ENCODE measurements at regions of chr2 and their contacts with region 1.

Region 1: DNA sequence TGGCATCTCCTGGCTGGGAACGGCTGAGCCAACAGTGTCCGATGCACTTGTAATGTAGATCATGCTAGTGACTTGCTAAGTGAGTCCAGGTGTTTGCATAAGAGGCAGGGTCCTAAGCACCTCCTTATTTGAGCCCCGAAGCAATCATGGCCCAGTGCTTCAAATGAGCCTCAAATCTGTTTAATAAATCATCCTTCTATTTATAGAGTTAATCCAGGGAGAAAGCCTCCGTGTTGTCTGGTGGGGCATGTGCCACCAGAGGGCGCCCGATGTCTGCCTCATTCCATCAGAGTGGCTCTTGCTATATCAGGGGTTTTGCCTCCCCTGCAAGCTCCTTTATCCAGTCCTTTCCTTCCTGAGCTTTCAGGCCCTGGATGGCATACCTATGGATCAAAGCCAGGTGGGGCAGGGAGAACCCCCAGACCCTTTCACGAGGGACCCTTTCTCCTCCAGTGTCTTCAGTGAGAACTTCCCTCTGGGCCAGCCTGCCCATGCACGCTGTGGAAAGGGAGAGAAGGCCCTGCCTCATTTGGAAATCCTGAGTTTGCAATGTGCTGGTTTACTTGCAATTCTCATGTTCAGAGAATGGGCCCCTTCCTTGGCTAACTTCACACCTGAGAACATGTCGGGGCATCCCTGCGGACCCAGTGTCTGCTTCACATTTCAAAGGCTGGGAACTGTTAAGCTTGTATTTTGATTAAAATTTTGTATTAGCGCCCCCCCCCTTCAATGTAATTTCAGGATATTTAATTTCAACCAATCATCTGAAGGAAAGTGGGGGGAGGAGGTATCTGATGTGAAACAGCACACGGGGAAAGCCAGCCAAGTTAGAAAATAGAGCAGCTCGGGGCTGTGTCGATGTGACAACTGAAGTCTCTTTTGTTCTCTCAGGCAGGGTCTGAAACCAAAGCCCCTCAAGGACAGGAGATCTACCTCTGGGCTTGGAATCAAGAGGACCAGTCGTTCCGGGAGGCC is 39.7 kb downstream of the RDH14 start:
- DNase-seq: peak; percentile 78
- ATAC-seq: peak; percentile 58
- H3K4me3 ChIP-seq: no peak overlapping the region
- H3K27ac ChIP-seq: no peak overlapping the region
- H3K4me1 ChIP-seq: peaks cover 21% of the 10 kb centered on the region
- H3K27me3 ChIP-seq: no peaks in the 10 kb centered on the region
- CTCF ChIP-seq: peak; percentile 95
- POLR2A ChIP-seq: peak; percentile 39; the same call in 1 of the 2 replicates
- RAD21 ChIP-seq: peak; percentile 97

Region 2: GRCh38 chr2:17317439-17317976 is 1203.2 kb before region 1 on chr2:
- CTCF ChIA-PET with region 1: no interaction called
- POLR2A ChIA-PET with region 1: no interaction called
- dilution Hi-C with region 1: no loop called
- in situ Hi-C with region 1: no loop called
- intact Hi-C with region 1: no loop called
- DNase-seq: no peak
- ATAC-seq: no peak
- H3K4me3 ChIP-seq: no peak overlapping the region
- H3K27ac ChIP-seq: no peak overlapping the region
- H3K4me1 ChIP-seq: no peaks in the 10 kb centered on the region
- H3K27me3 ChIP-seq: no peaks in the 10 kb centered on the region; the same call in 1 of the 2 replicates
- CTCF ChIP-seq: no peak
- POLR2A ChIP-seq: no peak
- RAD21 ChIP-seq: no peak

Region 3: GRCh38 chr2:18387441-18388206 is 133.1 kb before region 1 on chr2:
- CTCF ChIA-PET with region 1: interaction called, 3 read pairs
- POLR2A ChIA-PET with region 1: no interaction called
- dilution Hi-C with region 1: no loop called
- in situ Hi-C with region 1: no loop called
- intact Hi-C with region 1: loop called (anchors 5 kb)
- DNase-seq: peak; percentile 79
- ATAC-seq: peak; percentile 99
- H3K4me3 ChIP-seq: no peak overlapping the region
- H3K27ac ChIP-seq: no peak overlapping the region
- H3K4me1 ChIP-seq: no peaks in the 10 kb centered on the region
- H3K27me3 ChIP-seq: no peaks in the 10 kb centered on the region
- CTCF ChIP-seq: peak; percentile 94
- POLR2A ChIP-seq: no peak
- RAD21 ChIP-seq: peak; percentile 96

Region 4: DNA sequence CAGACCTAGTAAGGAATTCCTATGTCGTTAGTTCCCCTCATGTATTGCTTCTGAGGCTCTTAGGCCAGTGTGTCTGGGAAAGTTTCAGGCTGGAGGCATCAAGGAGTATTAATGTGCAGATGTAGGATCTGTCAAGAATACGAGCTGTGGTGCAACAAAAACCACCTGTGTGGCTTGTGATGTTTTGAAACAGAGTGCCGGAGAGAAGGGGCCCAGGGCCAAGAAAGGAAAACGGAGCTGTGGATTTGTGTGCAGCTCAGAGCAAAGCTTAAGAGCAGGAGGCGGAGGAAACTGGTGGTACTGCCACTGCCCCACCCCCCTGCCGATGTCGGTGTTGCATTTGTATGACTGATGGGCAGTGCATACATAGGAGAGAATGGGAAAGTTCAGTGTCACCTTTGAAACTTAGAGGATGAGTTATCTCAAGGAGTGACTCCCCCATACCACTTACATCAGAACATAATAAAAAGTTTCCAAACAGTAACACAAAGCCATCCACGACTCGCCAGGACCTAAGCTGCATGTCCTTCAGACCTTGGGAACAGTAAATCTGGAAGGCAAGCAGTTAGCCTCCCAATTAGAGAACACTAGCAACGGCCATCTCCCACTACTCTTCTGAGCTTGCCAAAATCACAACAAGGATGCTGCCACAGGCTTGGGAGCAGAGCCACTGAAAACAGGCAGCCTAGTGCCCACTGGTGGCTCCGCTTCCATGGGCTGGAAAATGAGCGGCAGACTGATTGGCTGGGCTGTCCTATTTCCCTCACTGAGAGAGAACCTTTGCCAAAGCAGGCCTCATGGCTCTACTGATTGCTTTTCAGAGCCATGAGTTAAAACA is 221.4 kb after region 1 on chr2:
- CTCF ChIA-PET with region 1: interaction called, 9 read pairs
- POLR2A ChIA-PET with region 1: no interaction called
- dilution Hi-C with region 1: no loop called
- in situ Hi-C with region 1: loop called (anchors 5 kb)
- intact Hi-C with region 1: loop called (anchors 1 kb)
- DNase-seq: peak; percentile 79
- ATAC-seq: peak; percentile 81
- H3K4me3 ChIP-seq: no peak overlapping the region
- H3K27ac ChIP-seq: peak overlapping the region; percentile 75; the same call in 1 of the 2 replicates
- H3K4me1 ChIP-seq: peaks cover 15% of the 10 kb centered on the region; the same call in 1 of the 2 replicates
- H3K27me3 ChIP-seq: no peaks in the 10 kb centered on the region
- CTCF ChIP-seq: no peak
- POLR2A ChIP-seq: no peak
- RAD21 ChIP-seq: no peak

Region 5: DNA sequence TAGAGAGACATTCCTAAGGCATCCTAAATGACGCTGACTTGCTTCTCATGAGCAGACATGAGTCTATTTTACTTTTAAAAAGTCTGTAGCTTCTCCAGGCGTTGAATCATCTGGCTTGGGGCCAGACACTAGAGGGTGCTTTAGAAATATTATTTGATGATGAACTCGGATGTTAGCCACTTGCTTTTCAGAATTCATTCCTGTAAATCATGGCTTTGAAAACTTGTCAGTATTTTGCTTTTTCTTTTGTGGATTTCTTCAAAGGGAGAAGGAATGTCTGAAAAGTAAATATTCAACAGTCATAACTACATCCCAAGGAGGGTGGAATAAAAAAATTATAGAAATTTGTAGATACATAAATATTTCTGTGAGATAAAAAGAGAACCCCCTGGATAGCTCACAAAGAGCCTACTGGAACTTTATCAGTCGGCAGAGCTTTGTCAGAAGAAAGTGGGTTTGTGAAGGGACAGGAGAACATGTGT is 466.9 kb after region 1 on chr2:
- CTCF ChIA-PET with region 1: no interaction called
- POLR2A ChIA-PET with region 1: no interaction called
- dilution Hi-C with region 1: no loop called
- in situ Hi-C with region 1: no loop called
- intact Hi-C with region 1: loop called (anchors 10 kb)
- DNase-seq: peak; percentile 95
- ATAC-seq: peak; percentile 62
- H3K4me3 ChIP-seq: no peak overlapping the region
- H3K27ac ChIP-seq: peak overlapping the region; percentile 63; the same call in 1 of the 2 replicates
- H3K4me1 ChIP-seq: peaks cover 11% of the 10 kb centered on the region
- H3K27me3 ChIP-seq: no peaks in the 10 kb centered on the region
- CTCF ChIP-seq: peak; percentile 44
- POLR2A ChIP-seq: no peak
- RAD21 ChIP-seq: peak; percentile 27

Region 6: GRCh38 chr2:19070886-19071285 is 550.1 kb after region 1 on chr2:
- CTCF ChIA-PET with region 1: no interaction called
- POLR2A ChIA-PET with region 1: no interaction called
- dilution Hi-C with region 1: no loop called
- in situ Hi-C with region 1: no loop called
- intact Hi-C with region 1: no loop called
- DNase-seq: peak; percentile 54
- ATAC-seq: peak; percentile 43
- H3K4me3 ChIP-seq: no peak overlapping the region
- H3K27ac ChIP-seq: no peak overlapping the region
- H3K4me1 ChIP-seq: peaks cover 8% of the 10 kb centered on the region
- H3K27me3 ChIP-seq: no peaks in the 10 kb centered on the region
- CTCF ChIP-seq: no peak
- POLR2A ChIP-seq: no peak
- RAD21 ChIP-seq: no peak

Region 7: DNA sequence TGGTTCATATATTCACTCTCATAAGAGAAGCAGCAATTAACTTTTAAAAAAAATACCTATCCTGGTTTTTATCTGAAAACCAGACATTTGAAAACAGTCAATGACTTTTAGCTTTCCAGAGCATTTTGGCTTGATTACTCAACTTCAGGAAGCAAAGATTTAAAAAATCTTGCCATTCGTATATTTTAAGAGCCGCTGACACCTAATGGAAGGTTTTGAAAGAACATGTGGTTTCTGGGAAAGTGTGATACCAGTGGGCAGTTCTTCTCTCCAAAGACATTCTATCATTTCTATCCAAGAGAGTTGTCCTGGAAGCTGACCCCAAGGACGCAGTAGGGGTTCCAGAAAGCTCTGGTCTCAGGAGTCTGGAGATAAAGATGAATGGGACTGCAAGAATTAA is 1146.3 kb after region 1 on chr2:
- CTCF ChIA-PET with region 1: no interaction called
- POLR2A ChIA-PET with region 1: no interaction called
- dilution Hi-C with region 1: no loop called
- in situ Hi-C with region 1: loop called (anchors 25 kb)
- intact Hi-C with region 1: loop called (anchors 1 kb)
- DNase-seq: peak; percentile 59
- ATAC-seq: peak; percentile 51
- H3K4me3 ChIP-seq: no peak overlapping the region
- H3K27ac ChIP-seq: no peak overlapping the region
- H3K4me1 ChIP-seq: no peaks in the 10 kb centered on the region; the same call in 1 of the 2 replicates
- H3K27me3 ChIP-seq: peaks cover 4% of the 10 kb centered on the region
- CTCF ChIP-seq: peak; percentile 47
- POLR2A ChIP-seq: no peak
- RAD21 ChIP-seq: peak; percentile 58

Region 8: DNA sequence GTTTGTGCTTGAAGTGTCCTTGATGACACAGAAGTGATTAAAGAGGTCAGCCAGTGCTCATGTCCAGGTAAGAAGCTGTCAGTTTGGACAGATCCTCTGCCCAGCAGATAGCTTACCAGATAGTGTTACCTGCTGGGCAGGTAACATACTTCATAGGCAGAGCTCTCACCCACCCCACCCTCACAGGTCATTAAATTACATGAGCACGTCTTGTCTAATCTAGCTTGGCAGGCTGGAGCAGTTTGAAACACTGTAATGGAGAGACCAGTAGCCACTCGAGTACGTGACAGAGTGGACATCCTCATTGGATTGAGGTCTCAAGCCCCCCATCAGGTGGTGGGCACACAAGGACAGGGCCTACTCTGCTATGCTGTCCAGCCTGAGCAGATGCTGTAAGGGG is 1354.0 kb after region 1 on chr2:
- CTCF ChIA-PET with region 1: no interaction called
- POLR2A ChIA-PET with region 1: no interaction called
- dilution Hi-C with region 1: no loop called
- in situ Hi-C with region 1: loop called (anchors 5 kb)
- intact Hi-C with region 1: no loop called
- DNase-seq: no peak
- ATAC-seq: no peak
- H3K4me3 ChIP-seq: no peak overlapping the region
- H3K27ac ChIP-seq: no peak overlapping the region
- H3K4me1 ChIP-seq: peaks cover 3% of the 10 kb centered on the region; the same call in 1 of the 2 replicates
- H3K27me3 ChIP-seq: peaks cover 26% of the 10 kb centered on the region
- CTCF ChIP-seq: no peak
- POLR2A ChIP-seq: no peak
- RAD21 ChIP-seq: no peak

Measured in IMR-90 (cell line).